ENCODE measurements at regions of chr9 and their contacts with region 1.

Region 1: DNA sequence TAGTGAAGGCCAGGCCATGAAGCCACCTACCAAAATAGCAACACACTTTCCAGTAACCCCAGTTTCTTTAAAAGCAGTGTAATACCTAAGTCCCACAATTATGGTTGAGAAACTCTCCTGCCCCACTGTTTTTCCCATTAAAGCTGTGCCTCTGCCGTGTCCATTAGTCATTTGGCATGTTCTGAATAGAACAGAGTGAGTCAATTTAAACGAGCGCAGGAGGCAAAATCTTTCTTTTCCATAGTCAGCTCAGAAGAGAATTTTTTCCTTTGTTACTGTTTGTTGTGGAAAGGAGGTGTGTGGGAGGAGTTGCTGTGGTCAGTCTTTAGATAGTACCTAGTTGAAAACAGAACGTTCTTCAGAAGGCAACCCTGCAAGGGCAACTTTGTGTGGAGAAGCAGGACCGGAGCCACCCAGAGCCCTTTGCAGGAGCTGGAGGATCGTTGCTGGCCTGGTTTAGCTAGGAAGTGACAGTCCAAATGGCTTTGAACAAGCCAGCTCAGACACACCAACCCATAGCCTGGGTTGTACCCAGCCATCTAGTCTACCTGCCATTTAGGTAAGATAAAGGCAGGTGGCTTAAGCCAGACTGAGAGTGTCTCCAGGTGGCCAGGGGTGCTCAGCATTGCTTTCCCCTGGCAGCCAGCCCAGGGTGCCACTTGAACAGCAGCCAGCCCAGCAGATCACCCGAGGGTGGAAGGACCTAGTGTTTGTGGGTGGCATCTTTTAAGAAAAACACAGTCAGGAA is 30.4 kb downstream of the GADD45G start:
- DNase-seq: no peak
- ATAC-seq: no peak

Region 2: DNA sequence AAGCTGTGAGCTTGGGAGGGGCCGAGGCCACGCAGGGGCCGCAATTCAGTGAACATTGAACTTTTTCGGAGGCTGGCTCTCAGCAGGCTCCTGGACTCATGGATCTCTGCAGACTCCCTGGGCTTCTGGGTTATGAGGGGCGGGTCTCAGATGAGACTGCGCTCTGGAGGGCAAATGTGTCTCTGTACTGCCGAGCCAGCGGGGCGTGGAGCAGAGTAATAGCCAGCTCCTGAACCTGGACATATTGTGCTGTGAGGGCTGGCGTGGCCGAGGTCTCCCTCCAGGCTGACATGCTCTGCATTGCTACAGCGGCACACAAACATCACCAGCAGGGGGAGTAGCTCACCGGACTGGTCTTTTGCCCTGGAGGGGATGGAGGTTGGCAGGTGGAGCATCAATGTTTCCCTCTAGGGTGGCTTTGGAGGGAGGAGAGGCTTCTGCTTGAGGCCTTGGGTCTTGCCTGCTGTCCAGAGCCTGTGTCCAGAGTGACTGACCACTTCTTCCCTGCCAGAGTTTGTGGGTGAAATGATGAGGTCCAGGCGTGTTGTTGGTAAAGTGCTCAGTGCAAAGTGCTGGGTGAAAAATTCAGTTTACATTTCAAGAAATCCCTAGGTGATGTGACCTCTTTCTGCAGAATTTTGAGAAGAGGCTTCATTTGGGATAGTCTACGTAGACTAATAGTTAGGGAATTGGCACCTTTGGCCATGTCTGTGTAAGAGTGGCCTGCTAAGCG is 41.3 kb before region 1 on chr9:
- intact Hi-C with region 1: no loop called
- DNase-seq: no peak
- ATAC-seq: peak; percentile 69

Region 3: DNA sequence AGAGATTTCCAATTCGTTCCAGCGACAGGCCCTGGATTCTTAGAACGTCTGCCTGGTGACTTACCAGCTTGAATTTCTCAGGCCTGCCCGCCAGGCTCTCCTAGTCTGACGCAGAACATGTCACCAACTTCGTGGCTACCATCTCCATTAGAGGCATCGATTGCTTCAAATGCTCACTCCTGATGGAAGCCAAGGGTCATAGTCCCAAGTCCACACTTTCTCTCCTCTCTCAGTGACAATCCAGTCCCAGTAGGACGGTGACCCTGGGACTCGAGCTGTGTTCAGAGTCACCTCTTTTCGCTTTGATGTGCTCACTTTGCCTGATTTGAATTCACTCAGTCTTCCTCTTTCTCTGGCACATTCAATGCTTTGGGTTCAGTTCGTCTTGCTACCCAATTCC is 64.5 kb after region 1 on chr9:
- intact Hi-C with region 1: loop called (anchors 2 kb)
- DNase-seq: no peak
- ATAC-seq: no peak